ENCODE measurements at regions of chr14 and their contacts with region 1.

Region 1: GRCh38 chr14:50773632-50774541 is 57.1 kb downstream of the NIN start:
- DNase-seq: peak; percentile 20
- ATAC-seq: 0 out of 2 replicates have a peak, but pooled peaks have one; percentile 62
- H3K4me3 ChIP-seq: no peak overlapping the region
- H3K27ac ChIP-seq: no peak overlapping the region
- H3K4me1 ChIP-seq: no peaks in the 10 kb centered on the region
- H3K27me3 ChIP-seq: no peaks in the 10 kb centered on the region
- CTCF ChIP-seq: peak; percentile 74

Region 2: GRCh38 chr14:50542941-50543418 is 230.9 kb before region 1 on chr14:
- CTCF ChIA-PET with region 1: no interaction called
- POLR2A ChIA-PET with region 1: no interaction called
- in situ Hi-C with region 1: no loop called
- intact Hi-C with region 1: loop called (anchors 5 kb)
- DNase-seq: no peak
- ATAC-seq: peak; percentile 73
- H3K4me3 ChIP-seq: no peak overlapping the region
- H3K27ac ChIP-seq: no peak overlapping the region
- H3K4me1 ChIP-seq: no peaks in the 10 kb centered on the region
- H3K27me3 ChIP-seq: no peaks in the 10 kb centered on the region
- CTCF ChIP-seq: peak; percentile 49

Region 3: GRCh38 chr14:50599700-50600444 is 174.0 kb before region 1 on chr14:
- CTCF ChIA-PET with region 1: no interaction called
- POLR2A ChIA-PET with region 1: no interaction called
- in situ Hi-C with region 1: no loop called
- intact Hi-C with region 1: loop called (anchors 5 kb)
- DNase-seq: peak; percentile 20
- ATAC-seq: 0 out of 2 replicates have a peak, but pooled peaks have one; percentile 62
- H3K4me3 ChIP-seq: no peak overlapping the region
- H3K27ac ChIP-seq: no peak overlapping the region
- H3K4me1 ChIP-seq: no peaks in the 10 kb centered on the region
- H3K27me3 ChIP-seq: no peaks in the 10 kb centered on the region
- CTCF ChIP-seq: peak; percentile 62; the same call in 1 of the 2 replicates

Region 4: GRCh38 chr14:50726372-50727107 is 47.3 kb before region 1 on chr14:
- CTCF ChIA-PET with region 1: no interaction called
- POLR2A ChIA-PET with region 1: no interaction called
- in situ Hi-C with region 1: no loop called
- intact Hi-C with region 1: no loop called
- DNase-seq: no peak
- ATAC-seq: no peak
- H3K4me3 ChIP-seq: no peak overlapping the region
- H3K27ac ChIP-seq: no peak overlapping the region
- H3K4me1 ChIP-seq: no peaks in the 10 kb centered on the region
- H3K27me3 ChIP-seq: no peaks in the 10 kb centered on the region
- CTCF ChIP-seq: no peak